ENCODE measurements at regions of chrX and their contacts with region 1.

Region 1: DNA sequence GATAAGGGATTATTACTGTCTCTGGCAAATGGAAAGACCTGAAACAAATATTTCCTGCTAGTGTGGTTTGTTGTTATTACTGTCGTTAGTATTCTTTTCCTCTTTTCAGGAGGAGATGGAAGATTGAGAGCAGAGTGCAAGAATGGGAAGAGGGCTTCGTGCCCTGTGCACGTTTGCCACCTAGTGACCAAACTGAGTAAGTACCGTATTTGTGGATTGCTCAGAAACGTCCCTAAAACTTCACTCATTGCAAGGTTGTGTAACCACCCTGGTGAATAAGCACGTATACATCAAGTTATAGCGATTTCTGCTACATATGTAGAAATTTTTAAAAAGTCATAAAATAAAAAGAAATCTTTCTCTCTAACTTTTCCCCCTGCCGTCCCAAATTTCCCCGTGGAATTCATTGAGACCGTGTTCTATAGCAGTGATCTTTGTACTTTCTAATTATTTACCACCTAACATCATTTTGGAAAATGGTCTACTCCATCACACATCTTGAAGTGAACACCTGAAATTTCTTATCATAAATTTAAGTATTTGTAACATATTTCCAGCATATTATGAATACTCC is 24.3 kb downstream of the LINC00632 start:
- DNase-seq: peak; percentile 25
- H3K4me3 ChIP-seq: no peak overlapping the region
- H3K27ac ChIP-seq: no peak overlapping the region
- H3K4me1 ChIP-seq: no peaks in the 10 kb centered on the region
- H3K27me3 ChIP-seq: no peaks in the 10 kb centered on the region
- CTCF ChIP-seq: peak; percentile 83

Region 2: GRCh38 chrX:140050906-140051305 is 683.0 kb before region 1 on chrX:
- CTCF ChIA-PET with region 1: no interaction called
- dilution Hi-C with region 1: no loop called
- in situ Hi-C with region 1: loop called in 1 of 2 experiments (anchors 25 kb)
- intact Hi-C with region 1: loop called (anchors 1 kb)
- DNase-seq: no peak
- H3K4me3 ChIP-seq: no peak overlapping the region
- H3K27ac ChIP-seq: no peak overlapping the region
- H3K4me1 ChIP-seq: no peaks in the 10 kb centered on the region
- H3K27me3 ChIP-seq: no peaks in the 10 kb centered on the region
- CTCF ChIP-seq: peak; percentile 32 to 48

Region 3: DNA sequence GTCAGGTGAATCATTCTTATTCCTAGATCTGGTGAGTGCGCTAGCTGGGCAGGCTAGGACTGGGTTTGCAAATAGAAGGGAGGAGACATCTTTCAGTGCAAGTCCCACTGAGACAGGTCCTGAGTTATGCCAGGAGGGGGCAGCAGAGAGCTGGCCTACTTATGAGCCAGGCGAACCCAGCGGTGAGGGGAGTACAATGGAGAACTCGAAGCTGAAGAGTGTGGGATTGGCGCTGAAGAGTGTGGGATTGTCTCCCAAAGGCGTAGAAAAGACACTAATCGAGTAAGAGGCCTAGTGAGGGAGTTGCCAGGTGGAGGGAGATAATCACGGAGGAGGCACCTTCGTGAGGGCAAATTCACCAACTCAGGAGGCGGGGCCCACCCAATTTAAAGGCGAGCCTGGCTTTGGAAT is 676.9 kb before region 1 on chrX:
- CTCF ChIA-PET with region 1: no interaction called
- dilution Hi-C with region 1: no loop called
- in situ Hi-C with region 1: loop called in 1 of 2 experiments (anchors 25 kb)
- intact Hi-C with region 1: loop called (anchors 1 kb)
- DNase-seq: peak; percentile 57
- H3K4me3 ChIP-seq: no peak overlapping the region
- H3K27ac ChIP-seq: no peak overlapping the region
- H3K4me1 ChIP-seq: no peaks in the 10 kb centered on the region
- H3K27me3 ChIP-seq: no peaks in the 10 kb centered on the region
- CTCF ChIP-seq: peak; percentile 74 to 91

Region 4: GRCh38 chrX:140141444-140142029 is 592.3 kb before region 1 on chrX:
- CTCF ChIA-PET with region 1: no interaction called
- dilution Hi-C with region 1: no loop called
- in situ Hi-C with region 1: no loop called
- intact Hi-C with region 1: loop called (anchors 5 kb)
- DNase-seq: peak; percentile 8
- H3K4me3 ChIP-seq: no peak overlapping the region
- H3K27ac ChIP-seq: no peak overlapping the region
- H3K4me1 ChIP-seq: no peaks in the 10 kb centered on the region
- H3K27me3 ChIP-seq: no peaks in the 10 kb centered on the region
- CTCF ChIP-seq: peak; percentile 58 to 70

Region 5: GRCh38 chrX:140572724-140573123 is 161.1 kb before region 1 on chrX:
- CTCF ChIA-PET with region 1: no interaction called
- dilution Hi-C with region 1: no loop called
- in situ Hi-C with region 1: no loop called
- intact Hi-C with region 1: loop called (anchors 2 kb)
- DNase-seq: peak; percentile 14
- H3K4me3 ChIP-seq: no peak overlapping the region
- H3K27ac ChIP-seq: no peak overlapping the region
- H3K4me1 ChIP-seq: no peaks in the 10 kb centered on the region
- H3K27me3 ChIP-seq: no peaks in the 10 kb centered on the region
- CTCF ChIP-seq: peak; percentile 52 to 72

Region 6: GRCh38 chrX:140672895-140673731 is 60.7 kb before region 1 on chrX:
- CTCF ChIA-PET with region 1: no interaction called
- dilution Hi-C with region 1: no loop called
- in situ Hi-C with region 1: no loop called
- intact Hi-C with region 1: loop called (anchors 10 kb)
- DNase-seq: no peak
- H3K4me3 ChIP-seq: no peak overlapping the region
- H3K27ac ChIP-seq: no peak overlapping the region
- H3K4me1 ChIP-seq: no peaks in the 10 kb centered on the region
- H3K27me3 ChIP-seq: no peaks in the 10 kb centered on the region
- CTCF ChIP-seq: no peak

Measured in mammary epithelial cell (primary cell).